HepG2 (cell line): ENCODE measurements at regions of chr11 and their contacts with region 1.

Region 1: GRCh38 chr11:81237139-81237538 is 1496.5 kb downstream of the FAM181B start:
- DNase-seq: peak; percentile 49
- ATAC-seq: peak; percentile 87
- H3K4me3 ChIP-seq: no peak overlapping the region
- H3K27ac ChIP-seq: no peak overlapping the region
- H3K4me1 ChIP-seq: no peaks in the 10 kb centered on the region
- H3K27me3 ChIP-seq: no peaks in the 10 kb centered on the region
- CTCF ChIP-seq: peak; percentile 69
- EP300 ChIP-seq: no peak
- POLR2A ChIP-seq: no peak
- RAD21 ChIP-seq: peak; percentile 43; the same call in 1 of the 2 replicates

Region 2: GRCh38 chr11:80155412-80156017 is 1081.6 kb before region 1 on chr11:
- CTCF ChIA-PET with region 1: no interaction called
- POLR2A ChIA-PET with region 1: no interaction called
- in situ Hi-C with region 1: no loop called
- intact Hi-C with region 1: loop called (anchors 5 kb)
- DNase-seq: peak; percentile 21
- ATAC-seq: peak; percentile 69
- H3K4me3 ChIP-seq: no peak overlapping the region
- H3K27ac ChIP-seq: no peak overlapping the region
- H3K4me1 ChIP-seq: no peaks in the 10 kb centered on the region
- H3K27me3 ChIP-seq: no peaks in the 10 kb centered on the region
- CTCF ChIP-seq: peak; percentile 42
- EP300 ChIP-seq: no peak
- POLR2A ChIP-seq: no peak
- RAD21 ChIP-seq: no peak